HEK293 (cell line): ENCODE measurements at regions of chr7 and their contacts with region 1.

Region 1: GRCh38 chr7:106026101-106026500 is 63.0 kb downstream of the CDHR3 start:
- H3K4me3 ChIP-seq: no peak overlapping the region
- H3K27ac ChIP-seq: no peak overlapping the region
- H3K4me1 ChIP-seq: no peaks in the 10 kb centered on the region
- CTCF ChIP-seq: no peak

Region 2: DNA sequence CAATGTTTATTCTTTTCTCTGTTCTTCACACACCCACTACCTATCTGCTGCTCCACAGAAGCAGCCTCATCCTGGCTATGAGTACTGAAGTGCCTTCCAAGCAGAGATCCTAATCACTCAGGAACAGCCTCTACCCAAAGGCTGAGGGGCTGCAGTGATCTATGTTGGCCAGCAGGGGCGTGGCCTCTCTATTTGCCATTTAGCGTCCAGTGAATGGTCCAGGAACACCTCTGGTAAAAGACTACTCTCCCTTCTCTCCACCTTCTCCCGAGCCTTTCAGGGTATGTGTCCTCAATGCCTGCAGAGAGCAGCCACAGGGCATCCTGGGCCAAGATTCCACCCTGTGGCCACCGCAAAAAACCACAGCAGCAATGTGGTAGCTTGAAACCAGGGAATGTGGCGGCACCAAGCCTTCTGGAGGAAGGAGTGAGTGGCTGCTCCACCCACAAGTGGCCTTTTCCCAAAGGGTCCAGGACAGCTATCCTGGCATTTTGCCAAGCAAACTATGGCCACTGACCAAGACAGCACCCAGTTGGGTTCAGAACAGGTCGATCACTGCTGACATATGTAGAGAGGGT is 15.1 kb after region 1 on chr7:
- CTCF ChIA-PET with region 1: interaction called, 29 read pairs
- POLR2A ChIA-PET with region 1: interaction called, 3 read pairs
- H3K4me3 ChIP-seq: no peak overlapping the region
- H3K27ac ChIP-seq: no peak overlapping the region
- H3K4me1 ChIP-seq: 0 out of 2 replicates have a peak, but pooled peaks cover 2% of the 10 kb centered on the region
- CTCF ChIP-seq: peak; percentile 63